Dorsolateral prefrontal cortex (tissue), 120 donors: ENCODE measurements at regions of chr4 and their contacts with region 1.

Region 1: DNA sequence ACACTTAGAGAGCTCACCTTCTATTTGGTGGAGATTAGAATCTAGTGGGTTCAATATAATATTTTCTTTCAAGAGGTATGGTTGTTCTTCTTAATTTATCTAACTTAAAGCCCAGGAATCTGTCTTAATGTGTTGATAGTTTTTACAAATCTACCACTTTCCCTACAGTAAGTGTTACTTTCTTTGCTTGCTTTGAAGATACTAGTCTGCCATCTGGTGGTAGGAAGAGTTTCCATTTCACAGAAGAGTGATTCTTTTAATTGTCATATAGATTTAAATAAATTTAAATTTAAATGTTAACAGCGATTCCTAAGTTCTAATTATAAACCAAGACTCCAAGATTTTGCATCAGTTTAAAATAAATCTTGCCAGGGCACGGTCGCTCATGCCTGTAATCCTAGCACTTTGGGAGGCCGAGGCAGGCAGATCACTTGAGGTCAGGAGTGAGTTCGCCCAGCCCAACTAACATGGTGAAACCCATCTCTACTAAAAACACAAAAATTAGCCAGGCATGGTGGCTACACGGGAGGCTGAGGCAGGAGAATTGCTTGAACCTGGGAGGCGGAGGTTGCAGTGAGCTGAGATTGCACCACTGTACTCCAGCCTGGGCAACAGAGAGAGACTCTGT is 43.5 kb downstream of the NUDT9 start:
- DNase-seq: no peak
- H3K4me3 ChIP-seq: no peak overlapping the region
- H3K27ac ChIP-seq: peak overlapping the region in 4 of 59 donors; percentile 7 to 53 (median 29)
- H3K27me3 ChIP-seq: no peaks in the 10 kb centered on the region
- CTCF ChIP-seq: peak; percentile 62 to 93 (median 80)

Region 2: GRCh38 chr4:87144356-87144755 is 321.5 kb before region 1 on chr4:
- intact Hi-C with region 1: loop called in 1 of 2 experiments (anchors 10 kb)
- DNase-seq: no peak
- H3K4me3 ChIP-seq: no peak overlapping the region
- H3K27ac ChIP-seq: no peak overlapping the region
- H3K27me3 ChIP-seq: no peaks in the 10 kb centered on the region
- CTCF ChIP-seq: no peak

Region 3: DNA sequence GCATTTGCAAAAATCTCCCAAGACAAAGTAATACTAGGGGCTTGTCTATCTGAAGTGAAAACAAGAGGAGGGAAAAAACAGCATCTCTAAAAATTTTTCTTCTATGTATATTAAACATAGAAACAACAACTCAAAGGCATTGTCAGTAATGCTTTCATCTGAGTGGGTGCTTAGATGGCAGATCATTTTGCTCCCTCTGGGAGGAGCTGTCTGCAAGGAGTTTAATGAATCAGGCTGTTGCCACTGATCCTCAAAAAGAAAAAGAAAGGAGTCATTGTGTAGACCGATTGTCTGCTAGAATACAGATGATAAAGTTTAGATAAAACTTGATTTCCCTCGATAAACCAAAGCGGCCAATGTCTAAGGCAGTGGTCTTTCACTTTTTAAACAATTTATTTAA is 195.7 kb before region 1 on chr4:
- intact Hi-C with region 1: loop called (anchors 5 kb)
- DNase-seq: peak in 2 of 10 donors; percentile 36 to 44
- H3K4me3 ChIP-seq: peak overlapping the region in 3 of 59 donors; percentile 10 to 17 (median 15)
- H3K27ac ChIP-seq: no peak overlapping the region
- H3K27me3 ChIP-seq: no peaks in the 10 kb centered on the region
- CTCF ChIP-seq: peak; percentile 11 to 88 (median 65)

Region 4: GRCh38 chr4:87375719-87376291 is 90.0 kb before region 1 on chr4:
- intact Hi-C with region 1: loop called (anchors 5 kb)
- DNase-seq: no peak
- H3K4me3 ChIP-seq: no peak overlapping the region
- H3K27ac ChIP-seq: peak overlapping the region in 4 of 59 donors; percentile 10 to 36 (median 12)
- H3K27me3 ChIP-seq: no peaks in the 10 kb centered on the region
- CTCF ChIP-seq: peak; percentile 45 to 85 (median 69)

Region 5: DNA sequence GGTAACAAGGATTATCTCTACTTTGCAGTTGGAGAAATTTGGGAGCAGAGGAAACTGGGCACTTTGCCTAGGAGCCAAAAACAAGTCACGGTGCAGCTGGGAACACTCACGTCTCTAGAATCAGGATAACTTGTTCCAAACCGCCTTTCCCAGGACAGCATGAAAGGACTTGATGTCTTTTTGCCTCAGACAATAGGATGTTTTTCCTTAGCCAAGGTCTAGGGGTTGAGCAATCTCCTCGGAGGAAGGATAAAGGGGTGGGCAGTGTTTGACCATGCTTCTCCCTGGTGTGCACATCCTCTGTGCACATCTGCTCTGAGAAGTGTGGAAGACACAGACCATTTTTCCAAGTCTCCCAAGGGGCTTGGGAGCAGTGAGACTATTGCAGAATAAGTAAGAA is 65.0 kb after region 1 on chr4:
- intact Hi-C with region 1: no loop called
- DNase-seq: peak in 7 of 10 donors; percentile 34 to 68 (median 52)
- H3K4me3 ChIP-seq: peak overlapping the region in 44 of 59 donors; percentile 4 to 79 (median 64)
- H3K27ac ChIP-seq: peak overlapping the region in 58 of 59 donors; percentile 59 to 98 (median 92)
- H3K27me3 ChIP-seq: no peaks in the 10 kb centered on the region
- CTCF ChIP-seq: no peak

Region 6: GRCh38 chr4:88033309-88033708 is 567.5 kb after region 1 on chr4:
- intact Hi-C with region 1: no loop called
- DNase-seq: no peak
- H3K4me3 ChIP-seq: no peak overlapping the region
- H3K27ac ChIP-seq: no peak overlapping the region
- H3K27me3 ChIP-seq: no peaks in the 10 kb centered on the region
- CTCF ChIP-seq: peak; percentile 40 to 81 (median 66)